ENCODE measurements at regions of chr21 and their contacts with region 1.

Region 1: GRCh38 chr21:30408782-30409494 is 13.1 kb downstream of the KRTAP13-1 start:
- DNase-seq: no peak
- ATAC-seq: no peak
- H3K4me3 ChIP-seq: no peak overlapping the region
- H3K27ac ChIP-seq: no peak overlapping the region
- H3K4me1 ChIP-seq: no peaks in the 10 kb centered on the region
- H3K27me3 ChIP-seq: no peaks in the 10 kb centered on the region
- CTCF ChIP-seq: no peak
- POLR2A ChIP-seq: no peak

Region 2: DNA sequence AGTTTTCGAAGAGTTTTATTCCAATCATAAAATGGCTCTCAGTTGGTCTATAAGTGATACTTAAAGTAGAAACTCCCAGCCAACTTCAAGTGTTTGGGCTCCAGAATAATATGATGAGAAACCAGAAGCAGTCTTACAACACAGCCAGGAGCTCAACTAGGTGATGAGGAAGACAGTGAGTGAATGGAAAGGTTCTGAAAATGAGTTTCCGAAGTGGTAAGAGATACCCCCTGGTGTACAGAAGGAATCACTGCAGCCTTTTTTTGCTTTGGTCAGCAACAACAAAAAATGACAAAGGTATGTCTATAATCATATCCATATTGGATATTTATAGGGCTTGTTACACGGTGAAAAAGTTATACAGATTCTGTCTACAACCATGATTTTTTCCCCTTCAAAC is 54.8 kb after region 1 on chr21:
- in situ Hi-C with region 1: loop called in 1 of 4 experiments (anchors 10 kb)
- intact Hi-C with region 1: no loop called
- DNase-seq: no peak
- ATAC-seq: no peak
- H3K4me3 ChIP-seq: no peak overlapping the region
- H3K27ac ChIP-seq: no peak overlapping the region
- H3K4me1 ChIP-seq: no peaks in the 10 kb centered on the region
- H3K27me3 ChIP-seq: no peaks in the 10 kb centered on the region
- CTCF ChIP-seq: no peak
- POLR2A ChIP-seq: no peak

Region 3: DNA sequence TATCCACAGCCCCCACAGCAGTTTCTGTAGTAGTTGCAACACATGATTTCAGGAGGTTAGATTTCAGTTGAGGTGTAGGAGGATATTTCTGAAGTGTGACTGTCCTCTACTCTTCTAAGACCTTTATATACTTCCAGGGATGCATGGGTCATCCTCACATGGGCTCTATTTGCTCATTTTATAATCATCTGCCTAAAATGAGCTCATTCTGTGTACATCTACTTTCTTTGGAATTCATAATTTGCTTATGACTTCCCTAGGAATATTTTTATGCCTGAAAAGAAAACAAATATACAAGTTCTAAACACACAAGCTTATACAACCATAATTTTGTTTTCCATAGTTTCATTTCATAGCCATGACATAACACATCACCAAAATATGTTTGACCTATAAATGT is 338.2 kb after region 1 on chr21 and contains the start of gene KRTAP21-2:
- in situ Hi-C with region 1: no loop called
- intact Hi-C with region 1: no loop called
- DNase-seq: no peak
- ATAC-seq: no peak
- H3K4me3 ChIP-seq: no peak within 1 kb of the TSS
- H3K27ac ChIP-seq: no peak within 1 kb of the TSS
- H3K4me1 ChIP-seq: no peaks in the 10 kb centered on the region
- H3K27me3 ChIP-seq: no peaks in the 10 kb centered on the region
- CTCF ChIP-seq: no peak
- POLR2A ChIP-seq: no peak
- total RNA-seq, gene KRTAP21-2: not detected

Measured in gastrocnemius medialis (tissue), 4 donors.